HepG2 (cell line): ENCODE measurements at regions of chr9 and their contacts with region 1.

Region 1: DNA sequence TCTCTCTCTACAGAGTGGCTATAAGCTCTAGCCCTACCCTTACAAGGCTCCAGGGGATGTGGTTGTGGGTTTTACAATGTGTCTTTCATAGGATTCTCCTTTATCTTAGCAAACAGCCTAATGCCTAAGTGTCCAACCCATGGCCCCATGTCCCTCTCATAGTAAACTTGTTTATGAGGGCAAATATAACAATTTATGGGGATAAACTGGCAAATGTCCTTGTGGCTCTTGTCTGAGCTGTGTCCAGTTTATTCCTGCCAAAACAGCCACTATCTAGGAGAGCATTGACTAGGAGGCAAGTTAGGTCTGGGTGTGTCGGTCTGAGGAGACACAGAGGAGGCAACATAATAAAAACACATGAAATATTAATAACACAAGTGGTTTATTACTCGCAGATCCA is 335.1 kb downstream of the IZUMO3 start:
- DNase-seq: no peak
- ATAC-seq: no peak
- H3K4me3 ChIP-seq: no peak overlapping the region
- H3K27ac ChIP-seq: no peak overlapping the region
- H3K4me1 ChIP-seq: no peaks in the 10 kb centered on the region
- H3K27me3 ChIP-seq: no peaks in the 10 kb centered on the region
- CTCF ChIP-seq: no peak
- EP300 ChIP-seq: no peak
- POLR2A ChIP-seq: no peak
- RAD21 ChIP-seq: no peak

Region 2: DNA sequence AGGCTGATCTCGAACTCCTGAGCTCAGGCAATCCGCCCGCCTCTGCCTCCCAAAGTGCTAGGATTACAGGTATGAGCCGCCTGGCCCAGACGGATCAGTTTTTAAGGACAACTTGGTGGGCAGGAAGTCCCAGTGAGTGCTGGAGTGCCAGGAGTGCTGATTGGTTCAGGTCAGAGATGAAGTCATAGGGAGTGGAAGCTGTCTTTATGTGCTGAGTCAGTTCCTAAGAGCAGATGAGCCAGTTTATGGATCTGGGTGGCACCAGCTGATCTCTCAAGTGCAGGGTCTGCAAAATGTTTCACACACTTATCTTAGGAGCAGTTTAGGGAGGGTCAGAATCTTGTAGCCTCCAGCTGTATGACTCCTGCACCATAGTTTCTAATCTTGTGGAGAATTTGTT is 92.5 kb before region 1 on chr9:
- CTCF ChIA-PET with region 1: no interaction called
- POLR2A ChIA-PET with region 1: no interaction called
- in situ Hi-C with region 1: no loop called
- intact Hi-C with region 1: no loop called
- DNase-seq: no peak
- ATAC-seq: no peak
- H3K4me3 ChIP-seq: no peak overlapping the region
- H3K27ac ChIP-seq: no peak overlapping the region
- H3K4me1 ChIP-seq: no peaks in the 10 kb centered on the region
- H3K27me3 ChIP-seq: no peaks in the 10 kb centered on the region
- CTCF ChIP-seq: no peak
- EP300 ChIP-seq: no peak
- POLR2A ChIP-seq: no peak
- RAD21 ChIP-seq: no peak

Region 3: DNA sequence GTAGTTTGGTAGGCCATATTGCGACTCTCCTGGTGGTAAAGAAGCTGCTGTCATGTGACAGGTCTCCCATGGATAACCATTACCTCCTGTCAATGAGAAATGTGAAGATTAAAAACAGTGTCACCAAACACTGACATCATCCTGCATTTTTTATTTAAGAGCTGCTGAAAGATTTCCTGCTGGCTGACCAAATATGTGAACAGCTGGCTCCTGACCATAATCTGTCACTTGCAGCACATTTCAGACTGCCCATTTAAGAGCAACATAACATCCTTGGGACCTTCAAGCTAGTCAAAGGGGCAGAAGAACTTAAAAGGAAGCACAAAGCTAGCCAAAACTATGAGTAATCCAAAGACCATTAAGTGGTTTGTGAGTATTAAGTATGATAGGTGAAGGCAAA is 47.1 kb after region 1 on chr9:
- CTCF ChIA-PET with region 1: no interaction called
- POLR2A ChIA-PET with region 1: no interaction called
- in situ Hi-C with region 1: no loop called
- intact Hi-C with region 1: loop called (anchors 10 kb)
- DNase-seq: no peak
- ATAC-seq: no peak
- H3K4me3 ChIP-seq: no peak overlapping the region
- H3K27ac ChIP-seq: no peak overlapping the region
- H3K4me1 ChIP-seq: no peaks in the 10 kb centered on the region
- H3K27me3 ChIP-seq: no peaks in the 10 kb centered on the region
- CTCF ChIP-seq: no peak
- EP300 ChIP-seq: no peak
- POLR2A ChIP-seq: no peak
- RAD21 ChIP-seq: no peak

Region 4: GRCh38 chr9:24721621-24722020 is 511.0 kb after region 1 on chr9:
- CTCF ChIA-PET with region 1: no interaction called
- POLR2A ChIA-PET with region 1: no interaction called
- in situ Hi-C with region 1: no loop called
- intact Hi-C with region 1: no loop called
- DNase-seq: no peak
- ATAC-seq: no peak
- H3K4me3 ChIP-seq: no peak overlapping the region
- H3K27ac ChIP-seq: no peak overlapping the region
- H3K4me1 ChIP-seq: no peaks in the 10 kb centered on the region
- H3K27me3 ChIP-seq: no peaks in the 10 kb centered on the region
- CTCF ChIP-seq: no peak
- EP300 ChIP-seq: no peak
- POLR2A ChIP-seq: no peak
- RAD21 ChIP-seq: no peak